ENCODE measurements at regions of chr1 and their contacts with region 1.

Region 1: GRCh38 chr1:160428655-160429054 is 28.3 kb downstream of the VANGL2 start:
- DNase-seq: peak in 3 of 5 donors; percentile 40 to 57 (median 43)
- ATAC-seq: peak; percentile 77 to 82 (median 80)
- H3K4me3 ChIP-seq: no peak overlapping the region
- H3K27ac ChIP-seq: peak overlapping the region in 4 of 12 donors; percentile 0 to 87 (median 22)
- H3K4me1 ChIP-seq: peaks cover 0 to 53% (median 3%) of the 10 kb centered on the region in 12 donors
- H3K27me3 ChIP-seq: no peaks in the 10 kb centered on the region
- CTCF ChIP-seq: peak; percentile 31 to 70 (median 56)
- POLR2A ChIP-seq: no peak

Region 2: DNA sequence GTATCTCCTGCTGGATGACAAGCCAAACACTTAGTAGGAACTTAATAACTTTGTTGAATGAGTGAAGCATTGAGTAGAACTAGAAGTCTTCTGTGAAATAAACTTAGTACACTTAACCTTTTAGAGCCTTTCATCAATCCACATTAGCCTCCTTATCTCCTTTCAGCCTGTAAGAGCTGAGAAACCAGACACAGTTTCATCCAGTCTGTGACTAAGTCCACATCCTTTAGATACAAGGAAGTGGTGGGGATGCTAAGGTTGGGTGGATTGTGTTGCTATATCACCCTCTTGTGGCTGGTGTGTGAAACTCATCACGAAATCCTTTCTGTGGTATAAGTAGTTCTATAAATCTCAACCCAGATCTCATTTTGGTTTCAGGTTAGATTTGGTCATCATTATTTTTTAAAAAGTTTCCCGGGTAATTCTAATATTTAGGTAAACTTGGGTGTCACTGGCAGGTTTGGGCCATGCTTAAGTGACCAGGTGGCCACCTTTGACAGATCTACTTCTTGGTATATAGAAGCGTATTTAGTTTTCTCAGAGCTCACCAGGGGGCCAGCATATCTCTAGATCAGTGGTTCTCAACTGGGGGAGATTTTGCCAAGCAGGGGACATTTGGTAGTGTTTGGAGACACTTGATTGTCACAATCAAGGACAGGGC is 178.5 kb after region 1 on chr1:
- intact Hi-C with region 1: loop called (anchors 1 to 5 kb)
- DNase-seq: peak in 1 of 5 donors; percentile 38
- ATAC-seq: peak; percentile 58 to 87 (median 78)
- H3K4me3 ChIP-seq: no peak overlapping the region
- H3K27ac ChIP-seq: no peak overlapping the region
- H3K4me1 ChIP-seq: peaks cover 0 to 20% (median 0%) of the 10 kb centered on the region in 12 donors
- H3K27me3 ChIP-seq: peaks cover 0 to 3% (median 0%) of the 10 kb centered on the region in 9 donors
- CTCF ChIP-seq: peak; percentile 50 to 72 (median 62)
- POLR2A ChIP-seq: no peak

Region 3: GRCh38 chr1:160681067-160681890 is 252.6 kb after region 1 on chr1:
- intact Hi-C with region 1: loop called in 1 of 10 experiments (anchors 5 kb)
- DNase-seq: peak; percentile 43 to 84 (median 61)
- ATAC-seq: peak in 3 of 4 donors; percentile 68 to 80 (median 68)
- H3K4me3 ChIP-seq: no peak overlapping the region
- H3K27ac ChIP-seq: peak overlapping the region in 1 of 12 donors; percentile 10
- H3K4me1 ChIP-seq: peaks cover 0 to 49% (median 0%) of the 10 kb centered on the region in 12 donors
- H3K27me3 ChIP-seq: peaks cover 0 to 11% (median 6%) of the 10 kb centered on the region in 9 donors
- CTCF ChIP-seq: peak in 11 of 12 donors; percentile 25 to 76 (median 45)
- POLR2A ChIP-seq: no peak

Measured in heart left ventricle (tissue), 16 donors.